Astrocyte of the cerebellum (primary cell): ENCODE measurements at regions of chr12 and their contacts with region 1.

Region 1: DNA sequence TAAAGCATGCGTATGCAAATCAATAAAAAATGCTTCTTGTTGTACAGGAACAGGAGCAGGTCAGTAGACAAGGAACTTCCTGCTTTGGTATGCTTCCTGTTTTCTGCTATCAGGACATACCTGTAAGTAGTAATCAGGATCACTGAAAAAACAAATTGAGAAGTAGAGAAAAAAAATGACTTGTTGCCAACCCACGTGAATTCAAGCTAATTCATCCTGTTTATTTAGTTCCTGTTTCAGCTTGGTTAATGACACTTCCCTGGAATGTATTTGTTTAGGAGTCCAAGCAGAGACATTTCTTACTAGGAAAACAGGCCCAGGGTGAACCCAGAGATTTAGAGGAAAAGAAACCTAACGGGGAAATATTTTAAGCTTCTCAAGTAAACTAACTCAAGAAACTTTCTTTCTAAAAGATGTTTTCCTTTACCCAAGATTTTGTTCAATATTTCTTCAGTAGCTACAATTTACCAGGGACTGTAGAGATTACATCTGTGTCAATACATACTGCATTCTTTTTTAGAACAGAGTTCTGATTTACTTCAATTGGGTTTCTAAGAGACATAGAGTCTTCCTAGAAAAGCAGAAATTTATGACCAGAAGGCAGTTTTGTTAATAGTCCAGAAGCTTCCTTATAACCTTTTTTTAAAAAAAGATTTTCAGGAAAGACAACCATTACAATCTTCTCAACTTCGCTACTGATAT is 124.1 kb downstream of the PAWR start:
- DNase-seq: no peak
- H3K4me3 ChIP-seq: no peak overlapping the region
- CTCF ChIP-seq: no peak

Region 2: DNA sequence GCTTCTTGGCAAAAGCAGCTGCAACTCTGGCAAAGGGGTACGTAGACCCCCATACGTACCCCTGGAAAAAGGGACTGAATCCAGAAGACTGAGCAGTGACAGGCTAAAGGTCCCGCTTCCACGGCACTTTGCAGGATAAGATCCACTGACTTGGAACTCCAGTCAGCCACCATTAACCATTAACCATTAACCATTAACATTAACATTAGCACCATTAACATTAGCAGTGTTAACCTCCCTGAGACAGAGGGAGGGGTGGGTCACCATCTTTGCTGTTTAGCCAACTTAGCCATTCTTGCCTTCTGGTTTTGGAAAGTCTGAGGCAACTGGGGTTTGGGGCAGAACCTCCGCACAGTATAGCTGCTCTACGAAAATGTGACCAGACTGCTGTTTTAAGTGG is 63.3 kb before region 1 on chr12:
- in situ Hi-C with region 1: no loop called
- DNase-seq: no peak
- H3K4me3 ChIP-seq: no peak overlapping the region
- CTCF ChIP-seq: no peak

Region 3: GRCh38 chr12:79615596-79616560 is 49.3 kb after region 1 on chr12:
- in situ Hi-C with region 1: loop called (anchors 5 kb)
- DNase-seq: no peak
- H3K4me3 ChIP-seq: no peak overlapping the region
- CTCF ChIP-seq: no peak